ENCODE measurements at regions of chr17 and their contacts with region 1.

Region 1: DNA sequence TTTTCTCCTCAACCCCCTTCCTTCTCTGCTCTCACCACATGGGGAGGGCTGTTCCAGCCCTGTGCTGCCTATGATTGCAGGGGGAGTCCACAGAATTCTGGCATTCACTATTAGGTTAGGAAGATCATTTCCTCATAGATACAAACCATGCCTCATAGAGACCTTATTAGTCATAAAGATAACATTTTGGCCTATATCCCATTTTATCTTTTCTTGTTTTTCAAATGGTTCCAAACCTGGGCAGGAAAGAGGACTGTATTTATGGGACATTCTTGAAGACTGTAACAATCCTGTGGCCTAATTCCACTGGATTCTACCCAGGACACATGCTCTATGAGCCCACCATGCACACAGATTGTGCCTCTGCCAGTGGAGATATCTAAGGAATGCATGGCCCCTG is 51.7 kb downstream of the ASIC2 start:
- DNase-seq: no peak
- ATAC-seq: no peak
- H3K4me3 ChIP-seq: no peak overlapping the region
- H3K27ac ChIP-seq: no peak overlapping the region
- H3K4me1 ChIP-seq: no peaks in the 10 kb centered on the region
- H3K27me3 ChIP-seq: peaks cover 0 to 23% (median 0%) of the 10 kb centered on the region in 9 donors
- CTCF ChIP-seq: no peak
- POLR2A ChIP-seq: no peak

Region 2: DNA sequence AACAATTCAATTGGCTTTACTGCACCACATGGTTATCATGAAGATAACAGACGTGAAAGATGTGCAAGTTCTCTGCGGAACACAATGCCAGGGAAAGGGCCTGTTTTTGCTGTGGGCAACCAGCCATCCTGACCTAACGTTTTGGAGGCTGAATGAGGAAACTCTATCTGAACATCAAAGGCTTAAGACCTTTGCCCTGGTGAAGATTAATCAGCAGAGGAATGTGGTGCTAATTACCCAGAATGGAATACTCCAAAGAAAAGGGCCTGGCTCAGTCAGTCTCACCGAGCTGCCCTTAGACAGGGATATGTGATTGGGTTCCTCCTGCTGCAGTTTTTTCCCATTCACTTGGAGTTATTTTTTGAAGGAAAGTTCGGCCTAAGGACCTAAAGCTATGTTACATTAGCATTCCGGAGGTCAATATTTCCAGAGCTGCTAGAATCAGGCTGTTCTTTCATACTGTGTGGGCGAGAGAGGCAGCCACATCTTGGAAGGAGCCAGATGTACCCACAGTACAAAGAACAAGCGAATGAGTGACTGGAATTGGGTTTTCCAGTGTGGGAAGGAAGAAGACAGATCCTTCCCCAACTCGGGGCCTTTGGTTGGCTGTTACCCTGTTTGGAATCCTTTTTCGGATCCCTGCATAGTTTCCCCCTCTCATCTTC is 36.2 kb after region 1 on chr17:
- intact Hi-C with region 1: loop called in 2 of 10 experiments (anchors 5 to 10 kb)
- DNase-seq: no peak
- ATAC-seq: no peak
- H3K4me3 ChIP-seq: no peak overlapping the region
- H3K27ac ChIP-seq: no peak overlapping the region
- H3K4me1 ChIP-seq: no peaks in the 10 kb centered on the region
- H3K27me3 ChIP-seq: peaks cover 0 to 30% (median 0%) of the 10 kb centered on the region in 9 donors
- CTCF ChIP-seq: no peak
- POLR2A ChIP-seq: no peak

Measured in heart left ventricle (tissue), 16 donors.